WTC11 (cell line): ENCODE measurements at regions of chr3 and their contacts with region 1.

Region 1: GRCh38 chr3:120095226-120095978 is 1.2 kb upstream of the GSK3B start:
- DNase-seq: peak; percentile 82
- ATAC-seq: peak; percentile 12
- H3K4me3 Mint-ChIP-seq: no peak overlapping the region
- H3K27ac Mint-ChIP-seq: peak overlapping the region; percentile 100
- H3K4me1 Mint-ChIP-seq: peaks cover 15% of the 10 kb centered on the region
- H3K27me3 Mint-ChIP-seq: no peaks in the 10 kb centered on the region
- CTCF ChIP-seq: no peak

Region 2: GRCh38 chr3:119891944-119892721 is 203.3 kb before region 1 on chr3:
- CTCF ChIA-PET with region 1: interaction called, 11 read pairs
- POLR2A ChIA-PET with region 1: interaction called, 4 read pairs
- DNase-seq: peak; percentile 15
- ATAC-seq: peak; percentile 82
- H3K4me3 Mint-ChIP-seq: no peak overlapping the region; the same call in 1 of the 2 replicates
- H3K27ac Mint-ChIP-seq: no peak overlapping the region
- H3K4me1 Mint-ChIP-seq: peaks cover 2% of the 10 kb centered on the region; the same call in 1 of the 2 replicates
- H3K27me3 Mint-ChIP-seq: no peaks in the 10 kb centered on the region; the same call in 1 of the 2 replicates
- CTCF ChIP-seq: peak; percentile 56

Region 3: DNA sequence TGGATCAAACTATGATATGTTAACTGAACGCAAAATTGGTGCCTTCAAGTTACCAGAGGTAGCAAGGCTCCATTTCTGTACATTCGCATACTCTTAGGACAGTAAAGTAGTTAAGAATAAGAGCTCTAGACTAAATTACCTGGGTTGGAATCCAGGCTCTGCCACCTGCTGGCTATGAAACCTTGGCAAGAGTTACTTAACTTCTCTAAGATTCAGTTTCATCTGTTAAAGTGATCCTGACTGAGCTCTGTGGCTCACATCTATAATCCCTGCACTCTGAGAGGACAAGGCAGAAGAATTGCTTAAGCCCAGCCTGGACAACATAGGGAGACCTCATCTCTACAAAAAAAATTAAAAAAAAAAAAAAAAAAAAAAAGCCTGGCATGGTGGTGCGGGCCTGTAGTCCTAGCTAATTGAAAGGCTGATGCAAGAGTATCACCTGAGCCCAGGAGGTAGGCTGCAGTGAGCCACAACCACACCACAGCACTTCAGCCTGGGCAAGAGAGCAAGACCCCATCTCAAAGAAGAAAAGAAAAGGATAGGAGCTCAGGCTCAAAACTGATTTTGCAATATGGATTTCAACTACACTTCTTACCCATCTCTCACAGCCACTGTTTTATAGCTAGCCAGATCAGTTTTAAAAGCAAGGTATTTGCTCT is 22.4 kb before region 1 on chr3:
- CTCF ChIA-PET with region 1: no interaction called
- POLR2A ChIA-PET with region 1: interaction called, 10 read pairs
- DNase-seq: no peak
- ATAC-seq: peak; percentile 32
- H3K4me3 Mint-ChIP-seq: no peak overlapping the region
- H3K27ac Mint-ChIP-seq: no peak overlapping the region
- H3K4me1 Mint-ChIP-seq: peaks cover 32% of the 10 kb centered on the region
- H3K27me3 Mint-ChIP-seq: no peaks in the 10 kb centered on the region
- CTCF ChIP-seq: no peak

Region 4: DNA sequence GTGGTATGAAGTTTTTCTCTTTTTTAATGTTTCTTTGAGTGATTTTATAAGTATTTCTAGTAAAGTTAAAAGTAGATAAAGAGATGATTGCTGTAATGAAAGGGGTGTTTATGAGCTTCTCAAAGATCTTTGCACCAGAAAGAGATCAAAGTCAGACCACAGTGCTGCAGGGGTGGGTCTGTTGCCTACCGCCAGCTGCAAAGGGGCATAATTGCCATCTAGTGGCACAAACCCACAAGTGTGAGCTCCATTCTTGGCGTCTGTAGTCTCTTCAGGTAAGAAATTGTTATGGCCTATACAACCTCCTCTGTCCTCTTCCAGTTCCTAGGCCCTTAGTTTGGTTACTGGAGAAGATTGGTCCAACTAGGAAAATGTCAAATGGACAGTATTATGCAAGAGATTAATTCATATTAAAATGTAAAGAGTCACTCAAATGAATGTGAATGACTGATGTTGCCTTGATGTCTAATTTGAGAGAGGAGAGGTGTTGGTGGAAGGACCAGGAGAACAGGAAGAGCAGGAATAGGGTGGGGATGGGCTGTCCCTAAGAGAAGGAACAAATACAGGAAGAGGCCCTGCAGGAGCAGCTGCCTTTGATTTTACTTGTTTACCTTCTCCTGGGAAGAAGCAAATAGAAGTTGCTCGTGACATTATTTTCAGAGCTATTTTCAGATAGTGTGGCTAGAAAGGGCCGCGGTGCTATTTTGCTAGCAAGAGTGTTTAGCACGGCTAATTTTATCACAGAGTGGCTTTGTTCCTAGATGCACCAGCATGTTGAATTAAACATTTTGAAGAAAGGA is 51.9 kb after region 1 on chr3:
- CTCF ChIA-PET with region 1: interaction called, 17 read pairs
- POLR2A ChIA-PET with region 1: interaction called, 9 read pairs
- DNase-seq: peak; percentile 19
- ATAC-seq: peak; percentile 87
- H3K4me3 Mint-ChIP-seq: no peak overlapping the region
- H3K27ac Mint-ChIP-seq: no peak overlapping the region
- H3K4me1 Mint-ChIP-seq: peaks cover 24% of the 10 kb centered on the region
- H3K27me3 Mint-ChIP-seq: no peaks in the 10 kb centered on the region
- CTCF ChIP-seq: no peak

Region 5: GRCh38 chr3:120160050-120160449 is 64.6 kb after region 1 on chr3:
- CTCF ChIA-PET with region 1: no interaction called
- POLR2A ChIA-PET with region 1: interaction called, 16 read pairs
- DNase-seq: peak; percentile 19
- ATAC-seq: no peak; the same call in none of the 2 replicates
- H3K4me3 Mint-ChIP-seq: no peak overlapping the region
- H3K27ac Mint-ChIP-seq: no peak overlapping the region
- H3K4me1 Mint-ChIP-seq: 0 out of 2 replicates have a peak, but pooled peaks cover 2% of the 10 kb centered on the region
- H3K27me3 Mint-ChIP-seq: peaks cover 7% of the 10 kb centered on the region
- CTCF ChIP-seq: no peak